Activated T-helper 2 cell treated with anti-CD3 and anti-CD28 coated beads, Interferon-gamma antibody, Interleukin-2, Interleukin-4, amounts not matched to agents 10 μg/mL and 5 μg/mL and 100 μg/mL, durations not matched to agents 14 hours and 24 hours and 36 hours (primary cell): ENCODE measurements at regions of chr5 and their contacts with region 1.

Region 1: DNA sequence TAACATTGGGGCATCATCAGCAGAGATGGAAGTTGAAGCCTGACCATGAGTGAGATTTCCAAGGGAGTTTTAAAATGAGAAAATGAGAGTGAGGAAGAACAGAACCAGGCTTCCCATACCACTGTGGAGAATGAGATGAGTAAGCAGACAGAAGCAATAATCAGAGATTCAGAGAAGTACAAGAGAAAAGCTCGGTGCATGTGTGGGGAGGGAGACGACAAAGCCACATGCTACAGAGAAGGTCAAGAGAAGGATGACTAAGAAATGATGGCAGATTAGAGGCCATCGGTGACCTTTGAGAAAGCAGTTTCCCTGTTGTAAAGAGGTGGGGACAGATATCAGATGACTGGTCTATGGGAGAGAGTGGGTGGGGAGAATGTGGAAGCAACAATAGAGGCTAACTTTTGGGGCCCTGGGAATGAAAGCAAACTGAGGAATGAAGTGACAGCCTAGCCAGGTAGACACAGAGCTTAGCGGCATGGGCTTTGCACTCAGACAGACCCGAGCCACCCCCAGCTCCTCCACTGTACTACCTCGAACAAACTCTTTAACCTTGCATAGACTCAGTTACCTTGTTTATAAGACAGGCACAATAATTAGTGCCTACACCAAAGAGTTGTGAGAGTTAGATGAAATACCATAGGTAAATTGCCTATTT is 207.7 kb downstream of the PIK3R1 start:
- DNase-seq: no peak
- H3K4me3 Mint-ChIP-seq: peak overlapping the region; percentile 30
- H3K27ac Mint-ChIP-seq: peak overlapping the region; percentile 59
- H3K4me1 Mint-ChIP-seq: peaks cover 50% of the 10 kb centered on the region
- H3K27me3 Mint-ChIP-seq: peaks cover 16% of the 10 kb centered on the region

Region 2: GRCh38 chr5:68279984-68280383 is 143.3 kb before region 1 on chr5:
- intact Hi-C with region 1: loop called (anchors 1 kb)
- DNase-seq: peak; percentile 61
- H3K4me3 Mint-ChIP-seq: peak overlapping the region; percentile 83
- H3K27ac Mint-ChIP-seq: peak overlapping the region; percentile 87
- H3K4me1 Mint-ChIP-seq: peaks cover 81% of the 10 kb centered on the region
- H3K27me3 Mint-ChIP-seq: no peaks in the 10 kb centered on the region

Region 3: GRCh38 chr5:68303038-68303738 is 120.1 kb before region 1 on chr5:
- intact Hi-C with region 1: loop called (anchors 1 kb)
- DNase-seq: no peak
- H3K4me3 Mint-ChIP-seq: no peak overlapping the region
- H3K27ac Mint-ChIP-seq: peak overlapping the region; percentile 74
- H3K4me1 Mint-ChIP-seq: peaks cover 55% of the 10 kb centered on the region
- H3K27me3 Mint-ChIP-seq: peaks cover 4% of the 10 kb centered on the region

Region 4: GRCh38 chr5:68343421-68343826 is 79.9 kb before region 1 on chr5:
- intact Hi-C with region 1: loop called (anchors 1 kb)
- DNase-seq: peak; percentile 20
- H3K4me3 Mint-ChIP-seq: no peak overlapping the region
- H3K27ac Mint-ChIP-seq: no peak overlapping the region
- H3K4me1 Mint-ChIP-seq: peaks cover 52% of the 10 kb centered on the region
- H3K27me3 Mint-ChIP-seq: peaks cover 7% of the 10 kb centered on the region

Region 5: DNA sequence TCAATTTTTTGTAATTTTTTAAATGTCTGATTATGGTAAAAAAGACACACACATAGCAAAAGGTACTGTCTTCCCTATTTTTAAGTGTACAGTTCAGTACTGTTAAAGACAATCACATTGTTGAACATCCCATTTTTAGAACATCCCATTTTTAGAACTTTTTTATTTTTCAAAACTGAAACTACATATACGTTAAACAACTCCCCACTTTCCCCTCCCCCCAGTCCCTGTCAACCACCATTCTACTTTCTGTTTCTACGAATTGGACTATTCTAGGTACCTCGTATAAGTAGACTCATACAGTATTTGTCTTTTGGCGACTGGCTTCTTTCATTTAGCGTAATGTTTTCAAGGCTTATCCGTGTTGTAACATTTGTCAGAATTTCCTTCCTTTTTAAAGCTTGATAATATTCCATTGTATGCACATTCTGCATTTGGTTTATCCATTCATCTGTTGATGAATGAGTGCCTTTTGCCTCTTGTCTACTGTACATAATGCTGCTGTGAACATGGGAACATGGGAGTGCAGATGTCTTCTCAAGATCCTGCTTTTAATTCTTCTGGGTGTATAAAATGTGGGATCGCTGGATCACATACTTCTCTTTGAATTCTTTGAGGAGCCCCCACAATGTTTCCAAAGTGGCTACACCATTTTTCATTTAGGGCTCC is 53.7 kb before region 1 on chr5:
- intact Hi-C with region 1: loop called (anchors 1 kb)
- DNase-seq: peak; percentile 54
- H3K4me3 Mint-ChIP-seq: peak overlapping the region; percentile 7
- H3K27ac Mint-ChIP-seq: peak overlapping the region; percentile 77
- H3K4me1 Mint-ChIP-seq: peaks cover 60% of the 10 kb centered on the region
- H3K27me3 Mint-ChIP-seq: no peaks in the 10 kb centered on the region

Region 6: GRCh38 chr5:68379275-68380036 is 43.8 kb before region 1 on chr5:
- intact Hi-C with region 1: loop called (anchors 1 kb)
- DNase-seq: no peak
- H3K4me3 Mint-ChIP-seq: no peak overlapping the region
- H3K27ac Mint-ChIP-seq: peak overlapping the region; percentile 61
- H3K4me1 Mint-ChIP-seq: peaks cover 70% of the 10 kb centered on the region
- H3K27me3 Mint-ChIP-seq: peaks cover 2% of the 10 kb centered on the region

Region 7: GRCh38 chr5:68406767-68407241 is 16.5 kb before region 1 on chr5:
- intact Hi-C with region 1: loop called (anchors 1 kb)
- DNase-seq: no peak
- H3K4me3 Mint-ChIP-seq: peak overlapping the region; percentile 35
- H3K27ac Mint-ChIP-seq: peak overlapping the region; percentile 72
- H3K4me1 Mint-ChIP-seq: peaks cover 25% of the 10 kb centered on the region
- H3K27me3 Mint-ChIP-seq: peaks cover 2% of the 10 kb centered on the region